ENCODE measurements at regions of chr2 and their contacts with region 1.

Region 1: DNA sequence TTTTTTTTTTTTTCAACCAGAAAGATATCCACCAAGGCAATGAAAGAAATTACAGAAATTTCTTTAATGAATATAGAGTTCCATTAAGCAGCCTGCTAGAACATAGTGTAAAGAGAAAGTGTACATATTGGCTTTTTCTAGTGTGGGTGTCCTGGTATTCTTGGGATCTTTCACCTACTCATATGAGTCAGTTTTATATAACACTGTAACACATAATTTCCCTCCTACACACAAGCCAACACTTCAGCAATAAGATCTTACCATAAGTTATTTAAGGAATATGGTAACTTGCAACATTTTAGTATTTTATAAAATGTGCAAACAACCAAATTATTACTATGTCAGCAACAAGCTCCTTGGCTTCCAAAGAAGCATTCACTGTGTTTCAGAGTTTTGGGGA is 59.9 kb downstream of the ZRANB3 start:
- DNase-seq: no peak
- ATAC-seq: no peak

Region 2: GRCh38 chr2:135451966-135452365 is 19.1 kb before region 1 on chr2:
- intact Hi-C with region 1: loop called (anchors 2 kb)
- DNase-seq: no peak
- ATAC-seq: no peak

Measured in left ventricle myocardium superior (tissue), 1 donor.